Activated CD4-positive, alpha-beta T cell treated with anti-CD3 and anti-CD28 coated beads, Interleukin-2, amount 10 ng/mL, durations not matched to agents 7 days and 5 days (primary cell): ENCODE measurements at regions of chr4 and their contacts with region 1.

Region 1: GRCh38 chr4:132264176-132264575 is 884.9 kb upstream of the PCDH10 start:
- DNase-seq: no peak
- H3K4me3 Mint-ChIP-seq: no peak overlapping the region
- H3K27ac Mint-ChIP-seq: no peak overlapping the region
- H3K4me1 Mint-ChIP-seq: no peaks in the 10 kb centered on the region
- H3K27me3 Mint-ChIP-seq: no peaks in the 10 kb centered on the region

Region 2: DNA sequence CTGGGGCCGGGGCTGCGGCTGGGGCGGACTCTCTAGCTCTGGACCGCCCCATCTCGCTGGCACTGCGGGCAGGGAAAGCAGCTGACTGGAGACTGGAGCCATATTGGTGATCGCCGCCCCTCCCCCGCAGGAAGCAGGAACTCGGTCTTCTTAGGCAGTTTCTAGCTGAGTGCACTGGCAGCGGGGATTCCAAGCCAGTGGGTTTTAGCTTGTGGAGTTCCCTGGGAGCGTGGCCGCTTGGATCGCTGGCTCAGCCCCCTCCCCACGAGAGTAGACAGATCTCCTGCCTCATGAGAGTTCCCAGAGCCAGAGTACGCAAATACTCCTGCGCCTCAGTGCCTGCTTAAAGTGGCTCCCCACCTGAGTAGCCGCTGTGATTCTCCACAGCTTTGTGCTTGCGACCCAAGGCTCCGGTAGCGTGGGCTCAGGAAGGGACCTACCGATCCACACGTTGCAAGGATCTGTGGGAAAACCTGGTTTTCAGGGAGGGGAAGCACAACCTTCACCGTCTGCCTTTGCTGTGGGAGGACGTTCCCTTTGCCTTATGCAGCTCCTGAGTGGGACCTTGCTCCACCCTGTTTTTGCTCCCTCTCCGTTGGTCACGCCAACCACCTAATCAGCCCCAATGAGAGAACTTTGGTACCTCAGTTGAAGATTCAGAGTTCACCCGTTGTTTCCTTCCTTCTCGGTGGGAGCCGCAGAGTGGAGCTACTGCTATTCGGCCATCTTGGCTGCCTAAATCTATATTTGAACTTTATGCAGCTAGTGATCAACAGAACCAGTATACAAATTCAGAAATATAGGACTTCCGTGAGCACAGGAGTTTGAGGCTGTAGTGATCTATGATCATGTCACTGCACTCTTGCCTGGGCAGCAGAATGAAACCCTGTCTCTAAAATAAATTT is 81.0 kb after region 1 on chr4:
- CTCF ChIA-PET with region 1: interaction called, 3 read pairs
- POLR2A ChIA-PET with region 1: interaction called, 10 read pairs
- DNase-seq: no peak
- H3K4me3 Mint-ChIP-seq: no peak overlapping the region
- H3K27ac Mint-ChIP-seq: no peak overlapping the region
- H3K4me1 Mint-ChIP-seq: no peaks in the 10 kb centered on the region
- H3K27me3 Mint-ChIP-seq: no peaks in the 10 kb centered on the region